ENCODE measurements at regions of chrX and their contacts with region 1.

Region 1: DNA sequence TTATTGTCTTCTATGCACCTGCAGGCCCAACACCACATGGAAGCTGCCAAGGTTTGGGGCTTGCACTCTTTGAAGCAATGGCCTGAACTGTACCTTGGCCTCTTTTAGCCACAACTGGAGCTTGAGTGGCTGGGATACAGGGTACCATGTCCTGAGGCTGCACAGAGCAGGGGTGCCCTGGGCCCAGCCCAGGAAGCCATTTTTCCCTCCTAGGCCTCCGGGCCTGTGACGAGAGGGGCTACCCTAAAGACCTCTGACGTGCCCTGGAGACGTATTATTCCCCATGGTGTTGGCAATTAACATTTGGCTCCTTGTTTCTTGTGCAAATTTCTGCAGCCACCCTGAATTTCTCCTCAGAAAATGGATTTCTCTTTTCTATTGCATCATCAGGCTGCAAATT is 519.9 kb upstream of the MAGEB18 start:
- DNase-seq: no peak
- H3K4me3 Mint-ChIP-seq: no peak overlapping the region
- H3K27ac Mint-ChIP-seq: no peak overlapping the region
- H3K4me1 Mint-ChIP-seq: no peaks in the 10 kb centered on the region
- H3K27me3 Mint-ChIP-seq: no peaks in the 10 kb centered on the region
- CTCF ChIP-seq: no peak

Region 2: GRCh38 chrX:25640276-25640675 is 22.0 kb after region 1 on chrX:
- CTCF ChIA-PET with region 1: no interaction called
- POLR2A ChIA-PET with region 1: no interaction called
- intact Hi-C with region 1: loop called (anchors 1 kb)
- DNase-seq: no peak
- H3K4me3 Mint-ChIP-seq: no peak overlapping the region
- H3K27ac Mint-ChIP-seq: no peak overlapping the region
- H3K4me1 Mint-ChIP-seq: no peaks in the 10 kb centered on the region
- H3K27me3 Mint-ChIP-seq: no peaks in the 10 kb centered on the region
- CTCF ChIP-seq: no peak